ENCODE measurements at regions of chr4 and their contacts with region 1.

Region 1: GRCh38 chr4:80619070-80619674 is 283.6 kb downstream of the CFAP299 start:
- DNase-seq: no peak
- ATAC-seq: no peak
- H3K4me3 ChIP-seq: no peak overlapping the region
- H3K27ac ChIP-seq: no peak overlapping the region
- H3K4me1 ChIP-seq: no peaks in the 10 kb centered on the region
- H3K27me3 ChIP-seq: no peaks in the 10 kb centered on the region
- CTCF ChIP-seq: no peak; the same call in 1 of the 2 replicates

Region 2: GRCh38 chr4:80343887-80344286 is 275.3 kb before region 1 on chr4:
- CTCF ChIA-PET with region 1: no interaction called
- POLR2A ChIA-PET with region 1: no interaction called
- in situ Hi-C with region 1: no loop called
- intact Hi-C with region 1: no loop called
- DNase-seq: no peak
- ATAC-seq: no peak
- H3K4me3 ChIP-seq: no peak overlapping the region
- H3K27ac ChIP-seq: no peak overlapping the region
- H3K4me1 ChIP-seq: no peaks in the 10 kb centered on the region
- H3K27me3 ChIP-seq: no peaks in the 10 kb centered on the region
- CTCF ChIP-seq: no peak

Region 3: GRCh38 chr4:80576796-80577195 is 42.4 kb before region 1 on chr4:
- CTCF ChIA-PET with region 1: no interaction called
- POLR2A ChIA-PET with region 1: no interaction called
- in situ Hi-C with region 1: no loop called
- intact Hi-C with region 1: no loop called
- DNase-seq: no peak
- ATAC-seq: no peak
- H3K4me3 ChIP-seq: no peak overlapping the region
- H3K27ac ChIP-seq: no peak overlapping the region
- H3K4me1 ChIP-seq: no peaks in the 10 kb centered on the region
- H3K27me3 ChIP-seq: no peaks in the 10 kb centered on the region
- CTCF ChIP-seq: no peak

Region 4: DNA sequence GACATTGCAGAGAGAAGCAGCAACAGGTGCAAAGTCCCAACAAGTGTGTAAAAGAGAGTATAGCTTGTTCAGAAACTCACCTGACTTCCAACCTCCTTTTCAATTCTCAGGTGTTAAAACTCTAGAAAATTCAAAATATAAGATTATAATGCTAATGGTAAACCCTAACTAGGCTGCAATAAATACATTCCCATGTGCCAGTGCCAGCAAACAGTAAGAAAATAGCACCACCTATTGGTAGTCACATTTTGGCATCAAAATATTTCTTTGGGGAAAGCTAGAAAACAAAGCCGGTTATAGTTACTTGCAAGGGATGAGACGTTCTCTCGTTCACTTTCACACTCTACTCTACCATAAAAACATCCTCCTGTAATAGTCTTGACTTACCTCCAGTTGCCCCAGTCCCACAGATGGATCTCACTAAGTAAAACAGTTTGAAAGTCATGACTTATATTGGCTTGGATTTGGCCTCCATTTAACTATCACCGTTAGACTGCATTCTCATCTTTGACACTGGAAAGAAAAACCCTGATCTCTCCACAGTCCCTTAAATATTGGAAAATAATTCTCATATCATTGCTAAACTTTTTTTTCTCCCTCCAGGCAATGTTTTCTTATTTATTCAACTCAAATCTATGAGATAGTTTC is 421.0 kb after region 1 on chr4:
- CTCF ChIA-PET with region 1: no interaction called
- POLR2A ChIA-PET with region 1: no interaction called
- in situ Hi-C with region 1: no loop called
- intact Hi-C with region 1: loop called (anchors 10 kb)
- DNase-seq: no peak
- ATAC-seq: no peak
- H3K4me3 ChIP-seq: no peak overlapping the region
- H3K27ac ChIP-seq: no peak overlapping the region
- H3K4me1 ChIP-seq: no peaks in the 10 kb centered on the region
- H3K27me3 ChIP-seq: no peaks in the 10 kb centered on the region
- CTCF ChIP-seq: peak; percentile 49; the same call in 1 of the 2 replicates

Measured in Panc1 (cell line).